ENCODE measurements at regions of chr9 and their contacts with region 1.

Region 1: GRCh38 chr9:31137176-31138160 is 1247.0 kb upstream of the ACO1 start:
- DNase-seq: no peak
- H3K4me3 ChIP-seq: no peak overlapping the region
- H3K27ac ChIP-seq: no peak overlapping the region
- H3K4me1 ChIP-seq: no peaks in the 10 kb centered on the region
- H3K27me3 ChIP-seq: no peaks in the 10 kb centered on the region
- CTCF ChIP-seq: no peak

Region 2: GRCh38 chr9:29830821-29831220 is 1306.6 kb before region 1 on chr9:
- intact Hi-C with region 1: loop called (anchors 10 kb)
- DNase-seq: peak; percentile 52
- H3K4me3 ChIP-seq: no peak overlapping the region
- H3K27ac ChIP-seq: no peak overlapping the region
- H3K4me1 ChIP-seq: no peaks in the 10 kb centered on the region
- H3K27me3 ChIP-seq: no peaks in the 10 kb centered on the region
- CTCF ChIP-seq: peak; percentile 41

Region 3: GRCh38 chr9:31210978-31211570 is 73.6 kb after region 1 on chr9:
- intact Hi-C with region 1: no loop called
- DNase-seq: no peak
- H3K4me3 ChIP-seq: no peak overlapping the region
- H3K27ac ChIP-seq: no peak overlapping the region
- H3K4me1 ChIP-seq: no peaks in the 10 kb centered on the region
- H3K27me3 ChIP-seq: no peaks in the 10 kb centered on the region
- CTCF ChIP-seq: no peak

Measured in colonic mucosa (tissue), 4 donors.